ENCODE measurements at regions of chrX and their contacts with region 1.

Region 1: GRCh38 chrX:110992611-110993010 is 103.4 kb upstream of the PAK3 start:
- DNase-seq: peak in 4 of 9 experiments; percentile 10 to 47 (median 22)
- ATAC-seq: no peak
- H3K4me3 ChIP-seq: no peak overlapping the region
- H3K4me3 Mint-ChIP-seq: no peak overlapping the region
- H3K27ac ChIP-seq: no peak overlapping the region
- H3K27ac Mint-ChIP-seq: no peak overlapping the region
- H3K4me1 ChIP-seq: no peaks in the 10 kb centered on the region
- H3K4me1 Mint-ChIP-seq: no peaks in the 10 kb centered on the region
- H3K27me3 ChIP-seq: no peaks in the 10 kb centered on the region
- H3K27me3 Mint-ChIP-seq: peaks cover 6% of the 10 kb centered on the region
- CTCF ChIP-seq: no peak

Region 2: DNA sequence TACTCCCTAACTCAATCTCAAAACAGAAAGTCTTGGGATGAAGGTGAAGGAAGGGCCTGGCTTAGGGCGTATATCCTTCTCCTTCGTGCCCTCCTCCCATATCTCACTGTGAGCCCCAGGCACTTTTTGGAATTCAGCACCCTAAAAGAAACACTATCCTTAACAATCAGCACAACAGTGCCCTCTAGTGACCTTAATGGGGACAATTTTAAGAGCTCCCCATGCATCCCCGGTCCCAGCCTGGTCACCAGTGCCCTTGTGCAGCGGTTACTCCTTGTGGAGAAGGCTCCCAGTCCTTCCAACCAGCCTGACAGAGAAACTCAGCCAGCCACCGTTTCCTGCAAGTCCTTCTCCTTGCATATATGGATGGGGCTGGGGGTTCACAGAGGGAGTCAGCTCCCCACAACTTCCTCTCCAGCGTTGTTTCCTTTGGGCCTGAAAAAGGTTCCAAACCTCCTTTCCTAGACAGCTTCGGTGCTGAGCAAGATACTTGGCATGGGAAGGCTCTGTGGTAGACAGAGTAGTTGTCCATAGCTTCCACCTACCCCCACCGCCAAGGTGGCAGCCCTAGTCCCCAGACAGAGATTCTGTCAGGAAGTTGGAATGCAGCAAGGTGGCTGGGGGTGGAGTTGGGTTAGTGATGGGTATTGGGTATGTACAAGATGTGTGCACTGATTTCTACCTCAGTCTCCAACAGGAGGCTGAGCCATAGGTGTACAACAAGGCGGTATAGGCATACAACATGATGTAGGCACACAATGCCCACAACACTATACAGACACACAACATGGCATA is 107.8 kb after region 1 on chrX:
- CTCF ChIA-PET with region 1: interaction called, 3 read pairs
- POLR2A ChIA-PET with region 1: no interaction called
- intact Hi-C with region 1: loop called in 1 of 2 experiments (anchors 2 kb)
- DNase-seq: peak in 4 of 9 experiments; percentile 16 to 61 (median 36)
- ATAC-seq: no peak
- H3K4me3 ChIP-seq: no peak overlapping the region
- H3K4me3 Mint-ChIP-seq: no peak overlapping the region
- H3K27ac ChIP-seq: no peak overlapping the region
- H3K27ac Mint-ChIP-seq: no peak overlapping the region
- H3K4me1 ChIP-seq: no peaks in the 10 kb centered on the region
- H3K4me1 Mint-ChIP-seq: peaks cover 13% of the 10 kb centered on the region
- H3K27me3 ChIP-seq: no peaks in the 10 kb centered on the region
- H3K27me3 Mint-ChIP-seq: peaks cover 8% of the 10 kb centered on the region
- CTCF ChIP-seq: peak; percentile 31